ENCODE measurements at regions of chr3 and their contacts with region 1.

Region 1: GRCh38 chr3:187616307-187616972 is 53.8 kb downstream of the SST start:
- H3K4me3 Mint-ChIP-seq: no peak overlapping the region
- H3K27ac Mint-ChIP-seq: no peak overlapping the region
- H3K4me1 Mint-ChIP-seq: no peaks in the 10 kb centered on the region
- H3K27me3 Mint-ChIP-seq: peaks cover 4% of the 10 kb centered on the region

Region 2: GRCh38 chr3:187319699-187320302 is 296.6 kb before region 1 on chr3:
- intact Hi-C with region 1: loop called (anchors 1 kb)
- H3K4me3 Mint-ChIP-seq: no peak overlapping the region
- H3K27ac Mint-ChIP-seq: no peak overlapping the region
- H3K4me1 Mint-ChIP-seq: no peaks in the 10 kb centered on the region
- H3K27me3 Mint-ChIP-seq: peaks cover 16% of the 10 kb centered on the region

Region 3: GRCh38 chr3:187628169-187628568 is 11.7 kb after region 1 on chr3:
- intact Hi-C with region 1: no loop called
- H3K4me3 Mint-ChIP-seq: no peak overlapping the region
- H3K27ac Mint-ChIP-seq: no peak overlapping the region
- H3K4me1 Mint-ChIP-seq: no peaks in the 10 kb centered on the region
- H3K27me3 Mint-ChIP-seq: peaks cover 12% of the 10 kb centered on the region

Region 4: DNA sequence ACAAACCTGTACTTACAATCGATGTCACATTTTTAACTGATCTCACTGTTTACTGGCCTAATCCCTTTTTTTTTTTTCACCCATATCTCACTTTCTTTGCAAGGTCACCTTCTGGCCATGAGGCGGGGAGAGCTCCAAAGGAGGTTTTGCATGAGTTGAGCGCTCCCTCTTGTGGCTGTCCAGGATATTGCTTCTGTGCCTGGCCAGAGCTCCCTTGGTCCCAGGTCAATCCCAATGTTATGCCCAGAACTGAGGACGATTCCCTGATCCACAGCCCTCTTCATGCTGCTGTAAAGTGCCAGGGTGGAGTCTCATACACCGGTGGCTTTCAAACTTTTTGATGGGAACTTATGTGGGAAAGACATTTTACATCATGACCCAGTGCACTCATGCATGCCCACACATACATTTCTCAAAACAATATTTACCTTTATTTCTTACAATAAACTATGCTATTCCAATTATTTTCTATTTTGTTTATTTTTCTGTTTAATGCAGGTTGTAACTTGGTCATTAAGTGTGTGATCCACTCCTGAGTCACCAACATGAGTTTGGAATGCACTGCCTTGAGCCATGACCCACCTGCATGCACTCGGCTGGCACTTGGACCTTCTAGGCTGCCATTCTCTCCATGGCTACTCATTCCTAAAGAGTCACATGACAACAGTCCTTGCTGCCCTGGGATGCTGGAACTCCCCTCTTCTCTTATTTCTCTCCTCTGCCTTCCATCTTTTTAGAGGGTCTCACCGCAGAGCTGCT is 63.4 kb after region 1 on chr3:
- intact Hi-C with region 1: loop called (anchors 1 kb)
- H3K4me3 Mint-ChIP-seq: no peak overlapping the region
- H3K27ac Mint-ChIP-seq: no peak overlapping the region
- H3K4me1 Mint-ChIP-seq: peaks cover 5% of the 10 kb centered on the region
- H3K27me3 Mint-ChIP-seq: peaks cover 23% of the 10 kb centered on the region

Measured in dendritic cell treated with granulocyte-macrophage colony-stimulating factor and Interleukin-4, amounts not matched to agents 40 ng/mL and 50 ng/mL, for 4 days (primary cell).